CD4-positive, alpha-beta T cell (primary cell): ENCODE measurements at regions of chr7 and their contacts with region 1.

Region 1: GRCh38 chr7:150716368-150716767 is at the start of gene GIMAP1:
- DNase-seq: peak; percentile 35 to 85 (median 72)
- ATAC-seq: peak; percentile 88
- H3K4me3 ChIP-seq: peak within 1 kb of the TSS; percentile 79
- H3K4me3 Mint-ChIP-seq: peak within 1 kb of the TSS; percentile 100
- H3K27ac ChIP-seq: peak within 1 kb of the TSS; percentile 81 to 83
- H3K27ac Mint-ChIP-seq: peak within 1 kb of the TSS; percentile 87
- H3K4me1 ChIP-seq: peaks cover 51% of the 10 kb centered on the region
- H3K4me1 Mint-ChIP-seq: peaks cover 78% of the 10 kb centered on the region
- H3K27me3 ChIP-seq: no peaks in the 10 kb centered on the region
- H3K27me3 Mint-ChIP-seq: no peaks in the 10 kb centered on the region
- CTCF ChIP-seq: no peak
- total RNA-seq, gene GIMAP1: 8.0 to 8.1 TPM

Region 2: DNA sequence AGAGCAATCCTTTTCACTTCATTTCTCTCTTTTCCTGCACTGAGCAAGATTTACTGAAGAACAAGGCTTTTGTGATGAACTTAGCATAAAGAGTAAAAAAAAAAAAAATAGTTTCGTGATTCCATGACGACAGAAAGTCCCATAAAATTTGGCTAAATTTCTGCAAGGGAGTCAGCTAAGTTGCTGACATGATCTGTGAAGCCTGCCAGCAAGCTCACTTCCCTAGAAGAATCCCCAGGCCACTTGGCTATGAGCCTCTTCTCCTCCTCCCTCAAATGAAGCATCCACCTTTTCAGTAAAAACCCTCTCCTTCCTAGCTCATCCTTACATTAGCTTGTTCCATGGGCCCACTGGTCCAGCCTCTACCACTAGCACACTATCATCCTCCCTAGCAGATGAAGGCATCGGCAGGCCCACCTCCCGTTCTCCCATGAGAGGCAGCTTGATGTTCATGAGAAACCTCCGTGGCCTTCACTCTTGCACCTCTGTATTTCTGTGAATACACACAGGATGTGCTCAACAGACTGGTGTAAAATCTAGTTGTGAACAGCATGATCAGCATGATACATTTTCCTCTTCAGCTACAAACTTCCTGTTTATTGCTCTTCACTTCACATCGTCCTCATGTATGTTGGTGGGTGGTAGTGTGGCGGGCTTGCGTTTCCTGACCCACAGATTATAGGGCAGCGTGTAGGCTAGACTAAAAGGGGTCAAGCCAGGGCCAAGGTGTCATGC is 235.0 kb before region 1 on chr7:
- CTCF ChIA-PET with region 1: no interaction called
- POLR2A ChIA-PET with region 1: interaction called, 14 read pairs
- intact Hi-C with region 1: no loop called
- DNase-seq: peak; percentile 36 to 90 (median 58)
- ATAC-seq: peak; percentile 59
- H3K4me3 ChIP-seq: peak overlapping the region; percentile 20
- H3K4me3 Mint-ChIP-seq: peak overlapping the region; percentile 84
- H3K27ac ChIP-seq: peak overlapping the region; percentile 92 to 95
- H3K27ac Mint-ChIP-seq: peak overlapping the region; percentile 97
- H3K4me1 ChIP-seq: peaks cover 76% of the 10 kb centered on the region
- H3K4me1 Mint-ChIP-seq: peaks cover 95% of the 10 kb centered on the region
- H3K27me3 ChIP-seq: no peaks in the 10 kb centered on the region
- H3K27me3 Mint-ChIP-seq: no peaks in the 10 kb centered on the region
- CTCF ChIP-seq: no peak

Region 3: GRCh38 chr7:150668472-150668911 is 47.9 kb before region 1 on chr7:
- CTCF ChIA-PET with region 1: interaction called, 10 read pairs
- POLR2A ChIA-PET with region 1: interaction called, 17 read pairs
- intact Hi-C with region 1: no loop called
- DNase-seq: peak in 13 of 14 experiments; percentile 34 to 92 (median 51)
- ATAC-seq: peak; percentile 82
- H3K4me3 ChIP-seq: peak overlapping the region; percentile 4
- H3K4me3 Mint-ChIP-seq: peak overlapping the region; percentile 49
- H3K27ac ChIP-seq: peak overlapping the region; percentile 73 to 85
- H3K27ac Mint-ChIP-seq: peak overlapping the region; percentile 91
- H3K4me1 ChIP-seq: peaks cover 70% of the 10 kb centered on the region
- H3K4me1 Mint-ChIP-seq: peaks cover 94% of the 10 kb centered on the region
- H3K27me3 ChIP-seq: no peaks in the 10 kb centered on the region
- H3K27me3 Mint-ChIP-seq: no peaks in the 10 kb centered on the region
- CTCF ChIP-seq: no peak

Region 4: DNA sequence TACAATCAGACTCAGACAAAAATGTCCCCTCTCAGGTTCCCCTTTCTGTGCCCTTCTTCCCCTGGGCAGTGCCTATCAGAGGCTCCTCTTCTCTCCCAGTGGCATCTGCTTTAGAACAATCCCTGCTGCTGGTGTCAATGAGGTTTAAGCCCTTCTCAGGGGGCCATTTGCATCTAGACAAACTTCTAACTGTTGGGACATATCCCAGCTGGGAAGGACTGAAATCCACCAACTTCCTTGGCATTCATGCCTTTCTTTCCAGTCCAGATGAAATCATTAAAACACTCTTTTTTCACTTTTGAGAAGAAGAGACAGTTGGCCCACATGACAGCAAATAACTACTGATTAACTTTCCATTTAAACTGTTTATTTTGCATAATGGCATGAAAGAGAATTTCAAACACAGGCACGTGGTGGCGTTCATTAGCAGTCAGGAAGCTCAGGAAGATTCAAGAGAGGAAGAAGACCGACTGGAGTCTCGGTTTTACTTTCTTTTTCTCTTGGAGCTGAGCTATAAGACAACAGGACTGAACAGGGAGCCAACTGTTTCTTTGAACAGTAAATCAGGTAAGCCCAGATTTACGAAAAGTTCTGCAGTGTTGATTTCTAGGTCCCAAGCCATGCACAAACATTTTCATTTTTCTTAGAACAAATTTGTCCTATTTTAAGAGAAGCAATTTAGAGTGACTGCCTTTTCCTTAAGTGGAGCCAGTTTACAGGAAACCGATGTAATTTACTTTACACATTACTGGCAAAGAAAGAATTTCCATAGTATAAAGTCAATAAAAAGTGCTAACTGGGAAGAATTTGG is 30.9 kb before region 1 on chr7 and contains the start of gene GIMAP2:
- CTCF ChIA-PET with region 1: interaction called, 5 read pairs
- POLR2A ChIA-PET with region 1: interaction called, 32 read pairs
- intact Hi-C with region 1: no loop called
- DNase-seq: peak in 9 of 14 experiments; percentile 22 to 81 (median 48)
- ATAC-seq: peak; percentile 86
- H3K4me3 ChIP-seq: peak within 1 kb of the TSS; percentile 80
- H3K4me3 Mint-ChIP-seq: peak within 1 kb of the TSS; percentile 100
- H3K27ac ChIP-seq: peak within 1 kb of the TSS; percentile 78 to 95
- H3K27ac Mint-ChIP-seq: peak within 1 kb of the TSS; percentile 100
- H3K4me1 ChIP-seq: peaks cover 44% of the 10 kb centered on the region
- H3K4me1 Mint-ChIP-seq: peaks cover 85% of the 10 kb centered on the region
- H3K27me3 ChIP-seq: no peaks in the 10 kb centered on the region
- H3K27me3 Mint-ChIP-seq: no peaks in the 10 kb centered on the region
- CTCF ChIP-seq: no peak
- total RNA-seq, gene GIMAP2: 64.1 to 65.1 TPM

Region 5: GRCh38 chr7:150737265-150738055 is 21.1 kb after region 1 on chr7 and contains the start of gene GIMAP5:
- CTCF ChIA-PET with region 1: interaction called, 27 read pairs
- POLR2A ChIA-PET with region 1: interaction called, 88 read pairs
- intact Hi-C with region 1: loop called (anchors 1 to 2 kb)
- DNase-seq: peak in 12 of 14 experiments; percentile 29 to 78 (median 70)
- ATAC-seq: peak; percentile 75
- H3K4me3 ChIP-seq: peak within 1 kb of the TSS; percentile 65
- H3K4me3 Mint-ChIP-seq: peak within 1 kb of the TSS; percentile 96
- H3K27ac ChIP-seq: peak within 1 kb of the TSS; percentile 80 to 87
- H3K27ac Mint-ChIP-seq: peak within 1 kb of the TSS; percentile 87
- H3K4me1 ChIP-seq: peaks cover 59% of the 10 kb centered on the region
- H3K4me1 Mint-ChIP-seq: peaks cover 74% of the 10 kb centered on the region
- H3K27me3 ChIP-seq: no peaks in the 10 kb centered on the region
- H3K27me3 Mint-ChIP-seq: no peaks in the 10 kb centered on the region
- CTCF ChIP-seq: no peak
- total RNA-seq, gene GIMAP5: 31.3 to 35.2 TPM

Region 6: GRCh38 chr7:152602962-152603361 is 1886.6 kb after region 1 on chr7:
- CTCF ChIA-PET with region 1: no interaction called
- POLR2A ChIA-PET with region 1: no interaction called
- intact Hi-C with region 1: no loop called
- DNase-seq: no peak
- ATAC-seq: no peak
- H3K4me3 ChIP-seq: no peak overlapping the region
- H3K4me3 Mint-ChIP-seq: no peak overlapping the region
- H3K27ac ChIP-seq: no peak overlapping the region
- H3K27ac Mint-ChIP-seq: no peak overlapping the region
- H3K4me1 ChIP-seq: no peaks in the 10 kb centered on the region
- H3K4me1 Mint-ChIP-seq: no peaks in the 10 kb centered on the region
- H3K27me3 ChIP-seq: peaks cover 0 to 4% of the 10 kb centered on the region in 2 experiments
- H3K27me3 Mint-ChIP-seq: peaks cover 4% of the 10 kb centered on the region
- CTCF ChIP-seq: no peak